Panc1 (cell line): ENCODE measurements at regions of chr3 and their contacts with region 1.

Region 1: GRCh38 chr3:14203521-14204079 is 25.0 kb downstream of the LSM3 start:
- DNase-seq: peak; percentile 61
- ATAC-seq: peak; percentile 89
- H3K4me3 ChIP-seq: no peak overlapping the region
- H3K27ac ChIP-seq: peak overlapping the region; percentile 69; the same call in 1 of the 2 replicates
- H3K4me1 ChIP-seq: peaks cover 22% of the 10 kb centered on the region
- H3K27me3 ChIP-seq: no peaks in the 10 kb centered on the region
- CTCF ChIP-seq: peak; percentile 83

Region 2: GRCh38 chr3:14188041-14188754 is 15.4 kb before region 1 on chr3:
- CTCF ChIA-PET with region 1: no interaction called
- POLR2A ChIA-PET with region 1: no interaction called
- in situ Hi-C with region 1: no loop called
- intact Hi-C with region 1: no loop called
- DNase-seq: no peak
- ATAC-seq: no peak
- H3K4me3 ChIP-seq: no peak overlapping the region
- H3K27ac ChIP-seq: no peak overlapping the region
- H3K4me1 ChIP-seq: no peaks in the 10 kb centered on the region
- H3K27me3 ChIP-seq: no peaks in the 10 kb centered on the region
- CTCF ChIP-seq: no peak

Region 3: GRCh38 chr3:14234251-14235002 is 30.8 kb after region 1 on chr3:
- CTCF ChIA-PET with region 1: interaction called, 11 read pairs
- POLR2A ChIA-PET with region 1: no interaction called
- in situ Hi-C with region 1: no loop called
- intact Hi-C with region 1: no loop called
- DNase-seq: no peak
- ATAC-seq: no peak
- H3K4me3 ChIP-seq: no peak overlapping the region
- H3K27ac ChIP-seq: peak overlapping the region; percentile 12; the same call in 1 of the 2 replicates
- H3K4me1 ChIP-seq: no peaks in the 10 kb centered on the region; the same call in 1 of the 2 replicates
- H3K27me3 ChIP-seq: no peaks in the 10 kb centered on the region
- CTCF ChIP-seq: no peak

Region 4: GRCh38 chr3:14261229-14261628 is 57.6 kb after region 1 on chr3:
- CTCF ChIA-PET with region 1: interaction called, 7 read pairs
- POLR2A ChIA-PET with region 1: interaction called, 5 read pairs
- in situ Hi-C with region 1: no loop called
- intact Hi-C with region 1: loop called (anchors 5 kb)
- DNase-seq: peak; percentile 61
- ATAC-seq: peak; percentile 67
- H3K4me3 ChIP-seq: no peak overlapping the region
- H3K27ac ChIP-seq: peak overlapping the region; percentile 85
- H3K4me1 ChIP-seq: peaks cover 48% of the 10 kb centered on the region
- H3K27me3 ChIP-seq: no peaks in the 10 kb centered on the region
- CTCF ChIP-seq: peak; percentile 92

Region 5: GRCh38 chr3:14297784-14298236 is 94.2 kb after region 1 on chr3:
- CTCF ChIA-PET with region 1: no interaction called
- POLR2A ChIA-PET with region 1: no interaction called
- in situ Hi-C with region 1: no loop called
- intact Hi-C with region 1: no loop called
- DNase-seq: no peak
- ATAC-seq: no peak
- H3K4me3 ChIP-seq: no peak overlapping the region
- H3K27ac ChIP-seq: no peak overlapping the region
- H3K4me1 ChIP-seq: peaks cover 3% of the 10 kb centered on the region; the same call in 1 of the 2 replicates
- H3K27me3 ChIP-seq: no peaks in the 10 kb centered on the region
- CTCF ChIP-seq: no peak